Dorsolateral prefrontal cortex (tissue), 120 donors: ENCODE measurements at regions of chr2 and their contacts with region 1.

Region 1: GRCh38 chr2:237572021-237572741 is 5.8 kb downstream of the PRLH start:
- DNase-seq: peak; percentile 77 to 90 (median 86)
- H3K4me3 ChIP-seq: peak overlapping the region in 4 of 59 donors; percentile 3 to 20 (median 4)
- H3K27ac ChIP-seq: no peak overlapping the region
- H3K27me3 ChIP-seq: no peaks in the 10 kb centered on the region
- CTCF ChIP-seq: peak; percentile 90 to 100 (median 99)

Region 2: GRCh38 chr2:237121321-237121720 is 450.9 kb before region 1 on chr2:
- intact Hi-C with region 1: loop called in 1 of 2 experiments (anchors 2 kb)
- DNase-seq: no peak
- H3K4me3 ChIP-seq: no peak overlapping the region
- H3K27ac ChIP-seq: no peak overlapping the region
- H3K27me3 ChIP-seq: peaks cover 0 to 2% (median 0%) of the 10 kb centered on the region in 45 donors
- CTCF ChIP-seq: no peak

Region 3: GRCh38 chr2:237456200-237456843 is 115.9 kb before region 1 on chr2:
- intact Hi-C with region 1: no loop called
- DNase-seq: no peak
- H3K4me3 ChIP-seq: no peak overlapping the region
- H3K27ac ChIP-seq: no peak overlapping the region
- H3K27me3 ChIP-seq: peaks cover 0 to 8% (median 0%) of the 10 kb centered on the region in 45 donors
- CTCF ChIP-seq: no peak

Region 4: GRCh38 chr2:237488901-237489801 is 83.0 kb before region 1 on chr2:
- intact Hi-C with region 1: no loop called
- DNase-seq: peak in 1 of 10 donors; percentile 9
- H3K4me3 ChIP-seq: no peak overlapping the region
- H3K27ac ChIP-seq: peak overlapping the region in 1 of 59 donors; percentile 6
- H3K27me3 ChIP-seq: peaks cover 0 to 50% (median 23%) of the 10 kb centered on the region in 45 donors
- CTCF ChIP-seq: no peak

Region 5: GRCh38 chr2:237512774-237513466 is 59.3 kb before region 1 on chr2:
- intact Hi-C with region 1: loop called (anchors 1 to 2 kb)
- DNase-seq: peak; percentile 58 to 90 (median 85)
- H3K4me3 ChIP-seq: no peak overlapping the region
- H3K27ac ChIP-seq: peak overlapping the region in 3 of 59 donors; percentile 1 to 41 (median 38)
- H3K27me3 ChIP-seq: peaks cover 0 to 2% (median 0%) of the 10 kb centered on the region in 45 donors
- CTCF ChIP-seq: peak; percentile 67 to 99 (median 94)